GM12878 (cell line): ENCODE measurements at regions of chr20 and their contacts with region 1.

Region 1: GRCh38 chr20:5056801-5057599 is 55.7 kb upstream of the SLC23A2 start:
- DNase-seq: peak; percentile 38
- ATAC-seq: peak; percentile 97
- H3K4me3 ChIP-seq: no peak overlapping the region
- H3K27ac ChIP-seq: no peak overlapping the region
- H3K4me1 ChIP-seq: peaks cover 4% of the 10 kb centered on the region; the same call in 1 of the 2 replicates
- H3K27me3 ChIP-seq: peaks cover 0 to 8% of the 10 kb centered on the region in 2 experiments; a peak in 1 of 4 replicates
- CTCF ChIP-seq: peak; percentile 43 to 56 (median 53)
- EP300 ChIP-seq: no peak
- POLR2A ChIP-seq: no peak
- RAD21 ChIP-seq: peak; percentile 48

Region 2: GRCh38 chr20:5001174-5002076 is 55.6 kb before region 1 on chr20 and contains the start of gene SLC23A2:
- CTCF ChIA-PET with region 1: interaction called, 7 read pairs
- POLR2A ChIA-PET with region 1: interaction called, 5 read pairs
- RAD21 ChIA-PET with region 1: interaction called, 7 read pairs
- SMC1A ChIA-PET with region 1: interaction called, 15 read pairs
- in situ Hi-C with region 1: no loop called
- intact Hi-C with region 1: no loop called
- DNase-seq: no peak
- ATAC-seq: peak; percentile 59
- H3K4me3 ChIP-seq: peak within 1 kb of the TSS; percentile 94
- H3K27ac ChIP-seq: no peak within 1 kb of the TSS
- H3K4me1 ChIP-seq: peaks cover 11% of the 10 kb centered on the region
- H3K27me3 ChIP-seq: no peaks in the 10 kb centered on the region; a peak in 1 of 4 replicates
- CTCF ChIP-seq: no peak
- EP300 ChIP-seq: no peak
- POLR2A ChIP-seq: peak; percentile 68
- RAD21 ChIP-seq: no peak
- polyA plus RNA-seq, gene SLC23A2: 4.4 to 5.9 TPM

Region 3: GRCh38 chr20:5024982-5025381 is 32.0 kb before region 1 on chr20:
- CTCF ChIA-PET with region 1: no interaction called
- POLR2A ChIA-PET with region 1: no interaction called
- RAD21 ChIA-PET with region 1: no interaction called
- SMC1A ChIA-PET with region 1: no interaction called
- in situ Hi-C with region 1: no loop called
- intact Hi-C with region 1: no loop called
- DNase-seq: no peak
- ATAC-seq: no peak
- H3K4me3 ChIP-seq: no peak overlapping the region
- H3K27ac ChIP-seq: no peak overlapping the region
- H3K4me1 ChIP-seq: no peaks in the 10 kb centered on the region
- H3K27me3 ChIP-seq: no peaks in the 10 kb centered on the region
- CTCF ChIP-seq: no peak
- EP300 ChIP-seq: no peak
- POLR2A ChIP-seq: no peak
- RAD21 ChIP-seq: no peak

Region 4: GRCh38 chr20:5041433-5041832 is 15.6 kb before region 1 on chr20:
- CTCF ChIA-PET with region 1: interaction called, 36 read pairs
- POLR2A ChIA-PET with region 1: interaction called, 7 read pairs
- RAD21 ChIA-PET with region 1: interaction called, 14 read pairs
- SMC1A ChIA-PET with region 1: interaction called, 18 read pairs
- in situ Hi-C with region 1: no loop called
- intact Hi-C with region 1: no loop called
- DNase-seq: no peak
- ATAC-seq: no peak
- H3K4me3 ChIP-seq: no peak overlapping the region
- H3K27ac ChIP-seq: no peak overlapping the region
- H3K4me1 ChIP-seq: peaks cover 3% of the 10 kb centered on the region; the same call in 1 of the 2 replicates
- H3K27me3 ChIP-seq: no peaks in the 10 kb centered on the region; a peak in 1 of 4 replicates
- CTCF ChIP-seq: no peak
- EP300 ChIP-seq: no peak
- POLR2A ChIP-seq: no peak
- RAD21 ChIP-seq: no peak

Region 5: DNA sequence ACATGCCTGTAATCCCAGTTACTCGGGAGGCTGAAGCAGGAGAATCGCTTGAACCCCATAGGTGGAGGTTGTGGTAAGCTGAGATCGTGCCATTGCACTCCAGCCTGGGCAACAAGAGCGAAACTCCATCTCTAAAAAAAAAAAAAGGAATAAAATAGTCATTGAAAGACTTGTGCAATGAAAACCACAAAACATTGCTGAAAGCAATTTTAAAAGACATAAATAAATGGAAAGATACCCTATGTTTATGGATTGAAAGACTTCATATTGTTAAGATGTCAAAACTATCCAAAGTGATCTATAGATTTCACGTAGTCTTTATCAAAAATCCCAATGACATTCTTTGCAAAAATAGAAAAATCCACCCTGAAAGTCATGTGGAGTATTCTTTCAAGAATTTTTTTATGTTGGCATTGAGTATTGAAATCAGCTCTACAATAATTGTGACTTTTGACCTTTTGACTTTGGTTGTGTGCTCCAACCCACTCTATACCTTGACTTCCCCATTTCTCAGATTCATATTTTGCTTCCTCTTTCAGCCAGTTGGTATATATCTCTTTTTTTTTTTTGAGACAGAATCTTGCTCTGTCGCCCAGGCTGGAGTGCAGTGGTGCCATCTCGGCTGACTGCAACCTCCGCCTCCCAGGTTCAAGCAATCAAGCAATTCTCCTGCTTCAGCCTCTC is 10.2 kb before region 1 on chr20:
- CTCF ChIA-PET with region 1: interaction called, 36 read pairs
- POLR2A ChIA-PET with region 1: interaction called, 7 read pairs
- RAD21 ChIA-PET with region 1: interaction called, 14 read pairs
- SMC1A ChIA-PET with region 1: interaction called, 18 read pairs
- in situ Hi-C with region 1: no loop called
- intact Hi-C with region 1: no loop called
- DNase-seq: no peak
- ATAC-seq: peak; percentile 89
- H3K4me3 ChIP-seq: no peak overlapping the region
- H3K27ac ChIP-seq: no peak overlapping the region
- H3K4me1 ChIP-seq: no peaks in the 10 kb centered on the region
- H3K27me3 ChIP-seq: no peaks in the 10 kb centered on the region; a peak in 1 of 4 replicates
- CTCF ChIP-seq: no peak
- EP300 ChIP-seq: no peak
- POLR2A ChIP-seq: no peak
- RAD21 ChIP-seq: no peak

Region 6: DNA sequence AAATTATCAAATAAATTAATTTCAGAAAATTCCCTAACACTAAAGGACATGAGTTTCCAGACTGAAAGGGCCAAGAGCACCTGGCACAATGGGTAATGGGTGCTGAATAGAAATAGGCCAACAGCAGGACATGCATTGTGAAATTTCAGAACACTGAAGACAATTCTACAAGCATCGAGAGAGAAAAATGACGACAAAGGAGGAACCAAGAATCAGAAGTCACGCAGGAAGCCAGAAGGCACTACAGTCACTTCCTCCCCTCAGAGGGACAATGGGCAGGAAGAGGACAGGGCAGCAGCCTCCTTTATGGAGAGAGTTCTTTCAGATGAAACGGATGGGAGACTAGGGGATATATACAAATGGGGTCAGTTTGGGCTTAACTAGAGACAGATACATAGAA is 33.2 kb after region 1 on chr20:
- CTCF ChIA-PET with region 1: interaction called, 14 read pairs
- POLR2A ChIA-PET with region 1: interaction called, 3 read pairs
- RAD21 ChIA-PET with region 1: interaction called, 5 read pairs
- SMC1A ChIA-PET with region 1: interaction called, 15 read pairs
- in situ Hi-C with region 1: no loop called
- intact Hi-C with region 1: no loop called
- DNase-seq: no peak
- ATAC-seq: peak; percentile 93
- H3K4me3 ChIP-seq: no peak overlapping the region
- H3K27ac ChIP-seq: no peak overlapping the region
- H3K4me1 ChIP-seq: no peaks in the 10 kb centered on the region
- H3K27me3 ChIP-seq: no peaks in the 10 kb centered on the region
- CTCF ChIP-seq: no peak
- EP300 ChIP-seq: peak; percentile 64 to 72; a peak in 2 of 4 replicates
- POLR2A ChIP-seq: no peak
- RAD21 ChIP-seq: no peak

Region 7: GRCh38 chr20:5095454-5095853 is 38.5 kb after region 1 on chr20:
- CTCF ChIA-PET with region 1: interaction called, 104 read pairs
- POLR2A ChIA-PET with region 1: interaction called, 8 read pairs
- RAD21 ChIA-PET with region 1: interaction called, 44 read pairs
- SMC1A ChIA-PET with region 1: interaction called, 79 read pairs
- in situ Hi-C with region 1: no loop called
- intact Hi-C with region 1: loop called (anchors 1 kb)
- DNase-seq: no peak
- ATAC-seq: no peak
- H3K4me3 ChIP-seq: no peak overlapping the region
- H3K27ac ChIP-seq: no peak overlapping the region
- H3K4me1 ChIP-seq: no peaks in the 10 kb centered on the region
- H3K27me3 ChIP-seq: no peaks in the 10 kb centered on the region
- CTCF ChIP-seq: no peak
- EP300 ChIP-seq: no peak
- POLR2A ChIP-seq: no peak
- RAD21 ChIP-seq: no peak